ENCODE measurements at regions of chr3 and their contacts with region 1.

Region 1: GRCh38 chr3:5122030-5122740 is at the start of gene ARL8B:
- DNase-seq: peak; percentile 88
- H3K4me3 Mint-ChIP-seq: peak within 1 kb of the TSS; percentile 95
- H3K27ac Mint-ChIP-seq: peak within 1 kb of the TSS; percentile 83
- H3K4me1 Mint-ChIP-seq: peaks cover 28% of the 10 kb centered on the region
- H3K27me3 Mint-ChIP-seq: no peaks in the 10 kb centered on the region
- total RNA-seq, gene ARL8B: 37.9 and 40.6 TPM in 2 replicates

Region 2: DNA sequence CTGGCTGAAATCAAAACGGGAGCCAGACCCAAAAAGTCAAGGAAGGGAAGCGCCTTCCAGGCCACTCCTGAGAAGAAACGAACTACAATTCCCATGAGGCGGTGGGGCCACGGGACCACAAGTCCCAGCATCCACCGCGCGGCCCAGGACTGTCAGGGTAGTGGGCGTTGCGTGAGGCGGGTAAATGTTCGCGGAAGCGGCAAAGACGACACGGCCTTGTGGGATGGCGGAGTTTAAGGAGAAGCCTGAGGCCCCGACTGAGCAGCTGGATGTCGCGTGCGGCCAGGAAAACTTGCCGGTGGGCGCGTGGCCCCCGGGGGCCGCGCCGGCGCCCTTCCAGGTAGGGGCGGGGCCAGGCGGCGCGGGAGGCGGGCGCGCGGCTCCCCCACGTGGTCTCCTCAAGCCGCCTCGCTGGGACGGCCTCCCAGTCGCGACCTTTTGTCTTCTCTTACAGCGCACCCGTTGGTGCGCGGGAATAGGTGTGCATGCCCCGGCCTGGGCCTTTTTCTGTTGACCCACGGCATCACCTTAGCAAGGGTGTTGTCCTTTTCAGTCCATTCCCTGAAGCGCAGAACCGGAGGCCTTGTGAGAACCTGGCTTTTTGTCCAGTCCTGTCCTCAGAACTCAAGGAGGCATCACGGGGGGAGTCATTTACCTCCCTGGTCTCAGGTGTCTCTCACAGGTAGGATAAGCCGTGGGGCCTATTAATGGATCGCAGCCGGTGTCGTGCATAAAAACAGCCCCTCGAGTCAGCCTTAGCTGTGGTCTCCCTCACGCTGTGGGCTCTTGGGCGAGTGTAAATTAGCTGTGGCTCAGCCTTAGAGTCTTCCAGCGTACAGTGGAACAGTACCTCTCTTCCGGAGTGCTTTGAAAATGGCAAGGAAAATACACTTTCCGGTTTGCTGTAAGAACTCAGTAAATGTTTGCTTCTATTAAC is 818.7 kb before region 1 on chr3 and contains the start of gene SETMAR:
- intact Hi-C with region 1: loop called (anchors 1 kb)
- DNase-seq: peak; percentile 75
- H3K4me3 Mint-ChIP-seq: peak within 1 kb of the TSS; percentile 90
- H3K27ac Mint-ChIP-seq: peak within 1 kb of the TSS; percentile 95
- H3K4me1 Mint-ChIP-seq: peaks cover 22% of the 10 kb centered on the region
- H3K27me3 Mint-ChIP-seq: peaks cover 4% of the 10 kb centered on the region
- total RNA-seq, gene SETMAR: 16.0 and 17.6 TPM in 2 replicates

Region 3: GRCh38 chr3:4387210-4388204 is 734.7 kb before region 1 on chr3:
- intact Hi-C with region 1: loop called (anchors 10 kb)
- DNase-seq: no peak
- H3K4me3 Mint-ChIP-seq: no peak overlapping the region
- H3K27ac Mint-ChIP-seq: peak overlapping the region; percentile 87
- H3K4me1 Mint-ChIP-seq: peaks cover 45% of the 10 kb centered on the region
- H3K27me3 Mint-ChIP-seq: no peaks in the 10 kb centered on the region

Region 4: GRCh38 chr3:4850928-4851265 is 271.3 kb before region 1 on chr3:
- intact Hi-C with region 1: loop called (anchors 5 kb)
- DNase-seq: no peak
- H3K4me3 Mint-ChIP-seq: peak overlapping the region; percentile 28
- H3K27ac Mint-ChIP-seq: peak overlapping the region; percentile 97
- H3K4me1 Mint-ChIP-seq: peaks cover 81% of the 10 kb centered on the region
- H3K27me3 Mint-ChIP-seq: no peaks in the 10 kb centered on the region

Region 5: GRCh38 chr3:5160928-5161858 is 39.0 kb after region 1 on chr3:
- intact Hi-C with region 1: loop called (anchors 2 kb)
- DNase-seq: no peak
- H3K4me3 Mint-ChIP-seq: no peak overlapping the region
- H3K27ac Mint-ChIP-seq: peak overlapping the region; percentile 50
- H3K4me1 Mint-ChIP-seq: peaks cover 32% of the 10 kb centered on the region
- H3K27me3 Mint-ChIP-seq: no peaks in the 10 kb centered on the region

Region 6: DNA sequence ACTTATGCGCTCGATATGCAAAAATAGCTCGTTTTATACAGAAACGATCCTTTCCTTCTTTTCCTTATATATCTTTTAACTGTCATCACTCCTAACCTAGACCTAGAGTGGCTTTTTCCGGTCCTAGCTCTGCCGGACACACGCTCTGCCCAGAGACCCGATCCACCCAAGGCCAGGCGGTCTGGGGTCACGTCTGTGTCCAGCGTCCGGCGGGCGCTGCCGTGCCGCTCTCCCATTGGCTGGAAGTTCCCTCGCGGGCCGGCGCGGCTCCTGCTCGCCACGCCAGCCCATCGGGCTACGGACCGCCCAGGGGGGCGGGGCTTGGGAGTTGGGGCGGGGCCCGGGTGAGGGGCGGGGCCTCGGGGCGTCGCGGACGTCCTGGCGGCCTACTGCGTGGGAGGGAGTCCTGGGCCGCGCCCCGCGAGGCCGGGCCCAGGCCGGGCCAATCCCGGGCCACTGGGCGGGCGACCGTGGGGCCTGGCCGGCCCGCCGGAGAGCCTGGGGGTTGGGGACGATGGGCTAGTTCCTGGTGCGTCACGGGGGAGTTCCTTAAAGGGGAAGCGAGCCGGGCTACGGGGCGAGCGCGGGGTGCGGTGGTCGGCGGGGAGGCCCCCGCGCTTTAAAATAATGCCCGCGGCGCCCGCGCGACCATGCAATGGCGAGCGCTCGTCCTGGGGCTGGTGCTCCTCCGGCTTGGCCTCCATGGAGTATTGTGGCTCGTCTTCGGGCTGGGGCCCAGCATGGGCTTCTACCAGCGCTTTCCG is 65.2 kb after region 1 on chr3 and contains the start of gene EDEM1:
- intact Hi-C with region 1: loop called (anchors 1 kb)
- DNase-seq: peak; percentile 95
- H3K4me3 Mint-ChIP-seq: peak within 1 kb of the TSS; percentile 99
- H3K27ac Mint-ChIP-seq: peak within 1 kb of the TSS; percentile 100
- H3K4me1 Mint-ChIP-seq: peaks cover 27% of the 10 kb centered on the region
- H3K27me3 Mint-ChIP-seq: no peaks in the 10 kb centered on the region
- total RNA-seq, gene EDEM1: 183 and 187 TPM in 2 replicates

Measured in activated T-helper 2 cell treated with anti-CD3 and anti-CD28 coated beads, Interferon-gamma antibody, Interleukin-2, Interleukin-4, amounts not matched to agents 10 μg/mL and 5 μg/mL and 100 μg/mL, durations not matched to agents 14 hours and 24 hours and 36 hours (primary cell).